GM10248 (cell line): ENCODE measurements at regions of chr6 and their contacts with region 1.

Region 1: DNA sequence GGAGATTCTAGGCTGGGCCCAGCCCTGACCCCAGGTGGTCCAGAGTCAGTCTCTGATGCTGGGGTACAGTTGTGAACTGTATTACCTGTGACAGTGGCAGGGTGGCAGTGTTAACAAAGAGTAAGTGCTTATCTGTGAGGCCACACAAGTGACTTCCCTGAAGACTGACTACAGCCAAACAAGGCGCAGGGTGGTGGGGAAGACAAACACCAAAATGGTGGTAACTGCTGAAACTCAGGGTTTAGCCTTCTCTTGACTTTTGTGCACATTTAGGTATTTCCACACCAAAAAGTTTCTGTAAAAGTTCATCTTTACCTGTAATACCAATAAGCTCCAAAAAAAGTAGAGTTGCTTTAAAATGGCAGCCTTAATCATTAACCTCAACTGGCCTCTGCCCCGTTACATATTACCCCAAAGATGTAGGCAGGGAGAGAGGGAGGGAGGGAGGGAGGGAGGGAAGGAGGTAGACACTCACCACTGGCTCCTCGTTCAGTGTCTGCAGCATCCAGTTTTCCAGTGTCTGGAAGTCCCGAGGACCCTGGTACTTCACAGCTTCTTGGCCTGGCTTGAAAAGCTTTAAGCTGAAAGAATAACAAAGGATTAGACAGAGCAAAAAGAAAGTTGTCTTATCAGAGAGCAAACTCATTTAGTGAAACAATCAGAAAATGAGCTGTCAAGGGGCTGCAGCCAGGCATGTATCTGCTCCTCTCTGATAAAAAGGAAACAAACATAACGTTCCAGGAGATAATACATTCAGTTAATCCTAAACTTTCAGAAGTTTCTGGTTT is 11.3 kb downstream of the TXNDC5 start:
- DNase-seq: peak; percentile 51
- CTCF ChIP-seq: no peak

Region 2: GRCh38 chr6:7909323-7910276 is 10.3 kb after region 1 on chr6:
- CTCF ChIA-PET with region 1: interaction called, 21 read pairs
- POLR2A ChIA-PET with region 1: no interaction called
- DNase-seq: peak; percentile 63
- CTCF ChIP-seq: no peak

Region 3: GRCh38 chr6:7914991-7915789 is 15.9 kb after region 1 on chr6:
- CTCF ChIA-PET with region 1: interaction called, 21 read pairs
- POLR2A ChIA-PET with region 1: no interaction called
- DNase-seq: no peak
- CTCF ChIP-seq: no peak

Region 4: GRCh38 chr6:8063761-8064637 is 164.7 kb after region 1 on chr6 and contains the start of gene BLOC1S5:
- CTCF ChIA-PET with region 1: interaction called, 15 read pairs
- POLR2A ChIA-PET with region 1: no interaction called
- DNase-seq: peak; percentile 90
- CTCF ChIP-seq: peak; percentile 6